SK-MEL-5 (cell line): ENCODE measurements at regions of chr14 and their contacts with region 1.

Region 1: GRCh38 chr14:74109369-74109768 is 24.6 kb downstream of the LIN52 start:
- DNase-seq: no peak

Region 2: GRCh38 chr14:74062829-74063190 is 46.6 kb before region 1 on chr14:
- in situ Hi-C with region 1: no loop called
- DNase-seq: no peak

Region 3: DNA sequence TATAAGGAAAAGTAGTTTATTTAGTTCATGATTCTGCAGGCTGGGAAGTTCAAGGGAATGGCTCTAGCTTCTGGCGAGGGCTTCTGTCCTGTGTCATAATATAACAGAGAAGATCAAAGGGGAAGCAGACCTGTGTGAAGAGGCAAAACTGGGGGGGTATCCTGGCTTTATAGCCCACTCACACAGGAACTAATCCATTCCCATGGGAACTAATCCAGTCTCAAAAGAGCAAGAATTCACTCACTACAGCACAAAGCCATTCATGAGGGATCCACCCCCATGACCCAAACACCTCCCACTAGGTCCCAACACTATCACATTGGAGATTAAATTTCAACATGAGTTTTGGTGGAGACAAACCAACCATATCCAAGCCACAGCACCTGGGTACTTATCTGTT is 32.0 kb before region 1 on chr14:
- in situ Hi-C with region 1: no loop called
- DNase-seq: no peak

Region 4: GRCh38 chr14:74207947-74208346 is 98.6 kb after region 1 on chr14:
- in situ Hi-C with region 1: no loop called
- DNase-seq: peak; percentile 47

Region 5: GRCh38 chr14:74290415-74290814 is 181.0 kb after region 1 on chr14:
- in situ Hi-C with region 1: loop called (anchors 25 kb)
- DNase-seq: peak; percentile 43